HCT116 (cell line): ENCODE measurements at regions of chr10 and their contacts with region 1.

Region 1: DNA sequence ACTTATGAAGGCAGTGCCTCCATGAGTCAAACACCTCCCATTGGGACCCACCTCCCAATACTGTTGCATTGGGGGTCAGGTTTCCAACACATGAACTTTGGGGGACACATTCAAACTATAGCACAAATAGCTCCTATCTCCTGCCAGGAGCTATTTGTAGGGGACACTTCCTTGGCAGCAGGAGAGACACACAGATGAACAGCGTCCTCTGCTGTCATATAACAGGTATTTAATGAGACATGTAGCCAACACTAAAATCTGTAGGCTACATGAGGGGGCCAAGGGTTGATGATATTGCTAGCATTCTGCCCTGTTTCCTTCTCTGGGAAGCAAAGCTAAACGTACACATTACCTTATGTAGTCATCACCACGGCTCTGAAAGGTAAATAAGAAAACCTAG is 2.6 kb upstream of the GPR26 start:
- DNase-seq: no peak
- ATAC-seq: peak; percentile 65; the same call in 1 of the 2 replicates
- H3K4me3 ChIP-seq: no peak overlapping the region
- H3K27ac ChIP-seq: no peak overlapping the region
- H3K4me1 ChIP-seq: no peaks in the 10 kb centered on the region
- H3K27me3 ChIP-seq: peaks cover 34% of the 10 kb centered on the region; the same call in 1 of the 2 replicates
- CTCF ChIP-seq: peak in 2 of 3 experiments; percentile 54 to 65; a peak in 4 of 6 replicates
- POLR2A ChIP-seq: no peak
- RAD21 ChIP-seq: peak; percentile 77

Region 2: DNA sequence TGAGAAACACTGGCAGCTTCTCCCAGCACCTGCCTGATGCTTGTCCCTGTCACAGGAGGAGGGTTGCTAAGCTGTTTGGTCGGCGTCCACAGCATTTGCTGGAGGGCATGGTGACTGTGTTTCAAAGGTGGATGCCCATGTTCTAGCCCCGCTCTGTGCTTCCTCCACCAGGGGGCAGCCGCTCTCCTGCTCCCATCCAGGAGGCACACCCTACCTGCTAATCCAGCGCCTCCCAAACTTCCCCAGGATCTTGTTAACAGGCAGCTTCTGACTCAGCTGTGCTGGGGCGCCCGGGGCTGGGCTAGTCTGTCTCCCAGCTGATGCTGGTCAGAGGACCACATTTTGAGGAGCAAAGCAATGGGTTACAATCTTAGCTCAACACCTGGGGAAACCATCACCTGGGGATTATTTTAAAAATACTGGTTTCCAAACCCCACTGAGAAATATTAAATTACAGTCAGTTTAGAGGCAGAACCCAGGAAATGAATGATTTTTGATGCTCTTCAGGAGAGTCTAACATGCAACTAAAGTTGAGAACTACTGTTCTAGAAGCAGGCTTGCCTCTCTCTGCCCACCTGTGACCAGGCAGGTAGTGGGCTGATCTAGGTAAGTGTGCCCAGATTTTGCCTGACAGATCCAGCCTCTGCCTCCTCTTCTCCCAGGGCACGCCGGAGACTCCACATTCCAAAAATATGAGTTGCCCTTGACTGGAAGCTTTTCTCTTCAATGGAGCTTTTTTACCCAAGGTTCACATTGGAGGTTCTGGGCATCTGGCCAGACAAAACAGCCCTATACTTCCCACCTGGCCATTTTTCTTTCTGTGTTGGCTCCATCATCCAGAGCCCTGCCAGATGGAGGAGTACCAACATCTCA is 90.0 kb before region 1 on chr10:
- CTCF ChIA-PET with region 1: interaction called, 11 read pairs
- POLR2A ChIA-PET with region 1: no interaction called
- RAD21 ChIA-PET with region 1: interaction called in 1 of 2 experiments, 3 read pairs
- intact Hi-C with region 1: no loop called
- DNase-seq: peak; percentile 83
- ATAC-seq: peak; percentile 97
- H3K4me3 ChIP-seq: peak overlapping the region in 1 of 2 experiments; percentile 23; a peak in 2 of 4 replicates
- H3K27ac ChIP-seq: peak overlapping the region; percentile 8; the same call in 1 of the 2 replicates
- H3K4me1 ChIP-seq: peaks cover 11 to 20% of the 10 kb centered on the region in 2 experiments
- H3K27me3 ChIP-seq: peaks cover 19% of the 10 kb centered on the region; the same call in 1 of the 2 replicates
- CTCF ChIP-seq: peak; percentile 89 to 99 (median 98)
- POLR2A ChIP-seq: no peak
- RAD21 ChIP-seq: peak; percentile 83

Region 3: GRCh38 chr10:123599366-123599849 is 64.1 kb before region 1 on chr10:
- CTCF ChIA-PET with region 1: no interaction called
- POLR2A ChIA-PET with region 1: no interaction called
- RAD21 ChIA-PET with region 1: no interaction called
- intact Hi-C with region 1: no loop called
- DNase-seq: no peak
- ATAC-seq: no peak
- H3K4me3 ChIP-seq: no peak overlapping the region
- H3K27ac ChIP-seq: no peak overlapping the region
- H3K4me1 ChIP-seq: no peaks in the 10 kb centered on the region
- H3K27me3 ChIP-seq: peaks cover 63% of the 10 kb centered on the region
- CTCF ChIP-seq: no peak
- POLR2A ChIP-seq: no peak
- RAD21 ChIP-seq: no peak

Region 4: GRCh38 chr10:124259139-124259825 is 595.8 kb after region 1 on chr10:
- CTCF ChIA-PET with region 1: no interaction called
- POLR2A ChIA-PET with region 1: no interaction called
- RAD21 ChIA-PET with region 1: no interaction called
- intact Hi-C with region 1: no loop called
- DNase-seq: peak; percentile 21
- ATAC-seq: peak; percentile 84
- H3K4me3 ChIP-seq: no peak overlapping the region
- H3K27ac ChIP-seq: no peak overlapping the region
- H3K4me1 ChIP-seq: no peaks in the 10 kb centered on the region
- H3K27me3 ChIP-seq: no peaks in the 10 kb centered on the region
- CTCF ChIP-seq: peak; percentile 39 to 59 (median 40); a peak in 5 of 6 replicates
- POLR2A ChIP-seq: no peak
- RAD21 ChIP-seq: peak; percentile 64